ENCODE measurements at regions of chr6 and their contacts with region 1.

Region 1: GRCh38 chr6:117555882-117556498 is 46.3 kb downstream of the GOPC start:
- DNase-seq: no peak
- ATAC-seq: no peak

Region 2: DNA sequence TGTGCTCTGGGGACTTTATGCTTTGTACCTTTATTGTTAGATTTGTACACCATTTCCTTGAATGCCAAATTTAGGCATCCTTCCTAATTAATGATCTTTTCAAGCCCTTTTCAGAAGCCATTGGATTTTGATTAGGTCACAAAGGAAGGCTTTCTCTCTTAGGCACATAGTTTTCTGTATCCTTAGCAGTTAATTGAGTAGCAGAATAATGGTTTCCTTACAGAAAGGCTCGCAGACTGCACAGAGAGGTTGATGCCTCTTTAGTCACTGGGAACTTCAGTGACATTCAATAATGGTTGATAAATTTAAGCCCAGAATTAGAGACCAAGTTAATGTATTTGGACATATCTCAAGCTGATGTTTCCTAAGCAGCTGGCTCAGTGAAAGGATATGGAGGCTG is 429.8 kb before region 1 on chr6:
- intact Hi-C with region 1: no loop called
- DNase-seq: no peak
- ATAC-seq: no peak

Region 3: DNA sequence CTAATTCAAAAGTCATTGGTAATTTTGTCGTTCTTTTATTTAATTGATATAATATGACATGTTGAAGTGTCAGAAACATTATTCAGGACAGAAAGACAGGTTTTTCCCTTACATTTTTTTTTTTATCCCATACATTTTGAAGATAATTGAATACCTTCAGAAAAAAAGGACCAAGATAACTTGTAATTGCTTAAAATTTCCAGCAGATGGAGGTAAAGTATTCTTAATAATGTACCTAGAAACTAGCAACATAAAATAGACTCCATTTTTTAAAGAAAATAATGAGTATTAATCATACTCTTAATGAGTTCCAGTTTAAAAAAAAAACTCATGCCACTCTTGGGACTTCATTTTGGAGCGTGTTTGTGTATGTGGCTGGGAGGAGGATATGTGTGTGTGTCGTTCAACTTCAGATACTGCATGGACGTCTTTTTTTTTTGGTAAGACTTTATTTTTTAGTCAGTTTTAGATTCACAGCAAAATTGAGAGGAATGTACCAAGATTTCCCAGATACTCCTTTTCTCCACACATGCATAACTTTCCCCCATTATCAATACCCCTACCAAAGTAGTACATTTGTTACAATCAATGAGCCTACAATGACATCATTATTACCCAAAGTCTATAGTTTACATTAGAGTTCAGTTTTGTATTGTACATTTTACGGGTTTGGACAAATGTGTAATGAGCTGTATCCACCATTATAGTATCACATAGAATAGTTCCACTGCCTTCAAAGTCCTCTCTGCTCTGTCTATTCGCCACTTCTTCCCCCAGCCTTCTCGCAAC is 209.7 kb before region 1 on chr6:
- intact Hi-C with region 1: loop called (anchors 5 kb)
- DNase-seq: no peak
- ATAC-seq: no peak

Region 4: DNA sequence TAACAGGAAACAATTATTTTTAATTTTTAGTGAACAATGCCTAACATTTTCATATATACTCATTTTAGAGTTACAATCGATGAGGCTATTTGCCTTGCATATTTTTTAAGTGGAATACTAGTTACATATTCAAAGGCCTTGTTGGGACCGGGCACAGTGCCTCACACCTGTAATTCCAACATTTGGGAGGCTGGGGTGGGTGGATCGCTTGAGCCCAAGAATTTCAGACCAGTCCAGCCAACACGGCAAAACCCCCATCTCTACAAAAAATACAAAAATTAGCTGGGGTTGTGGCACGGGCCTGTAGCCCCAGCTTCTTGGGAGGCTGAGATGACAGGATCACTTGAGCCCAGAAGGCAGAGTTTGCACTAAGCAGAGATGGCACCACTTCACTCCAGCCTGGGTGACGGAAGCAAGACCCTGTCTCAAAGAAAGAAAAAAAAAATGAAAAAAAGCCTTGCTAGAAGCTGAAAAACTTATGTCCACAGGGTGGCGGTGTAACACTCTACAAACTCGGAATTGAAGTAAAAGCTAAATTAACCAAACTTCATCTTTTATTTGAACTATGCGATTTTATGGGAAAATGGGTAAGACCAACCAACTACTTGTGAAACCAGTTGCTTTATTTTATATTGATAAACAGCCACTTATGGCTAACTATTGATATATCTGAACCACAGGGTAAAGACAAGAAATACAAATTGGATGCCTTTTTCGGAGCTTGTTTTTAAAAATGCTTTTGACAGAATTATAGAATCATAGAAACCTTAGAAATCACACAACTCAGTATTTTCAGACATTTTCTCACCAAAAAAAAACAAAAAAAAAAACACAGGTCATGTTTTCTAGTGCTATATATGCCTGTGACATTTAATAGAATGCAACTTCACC is 106.2 kb before region 1 on chr6:
- intact Hi-C with region 1: loop called (anchors 2 kb)
- DNase-seq: no peak
- ATAC-seq: no peak

Region 5: DNA sequence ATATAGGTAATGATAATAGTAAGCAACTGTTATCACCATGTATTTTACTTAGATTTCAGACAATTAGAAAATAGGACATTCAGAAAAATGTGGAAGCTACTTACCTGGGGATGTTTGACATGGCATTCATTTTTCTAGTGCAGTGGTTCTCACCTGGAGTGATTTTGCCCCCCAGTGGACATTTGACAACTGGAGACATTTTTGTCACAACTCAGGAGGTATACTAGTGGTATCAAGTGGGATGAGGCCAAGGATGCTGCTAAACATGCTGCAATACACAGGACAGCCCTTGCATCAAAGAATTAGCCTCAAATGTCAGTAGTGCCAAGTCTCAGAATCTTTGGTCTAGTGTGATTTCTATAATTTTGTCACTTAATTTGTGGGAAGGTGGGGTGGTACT is 155.4 kb after region 1 on chr6:
- intact Hi-C with region 1: no loop called
- DNase-seq: no peak
- ATAC-seq: no peak